ENCODE measurements at regions of chr7 and their contacts with region 1.

Region 1: GRCh38 chr7:129343099-129343700 is 91.0 kb upstream of the STRIP2 start:
- DNase-seq: peak; percentile 16
- ATAC-seq: peak; percentile 50
- H3K4me3 Mint-ChIP-seq: no peak overlapping the region
- H3K27ac Mint-ChIP-seq: no peak overlapping the region
- H3K4me1 Mint-ChIP-seq: peaks cover 31% of the 10 kb centered on the region
- H3K27me3 Mint-ChIP-seq: no peaks in the 10 kb centered on the region
- CTCF ChIP-seq: peak; percentile 83

Region 2: DNA sequence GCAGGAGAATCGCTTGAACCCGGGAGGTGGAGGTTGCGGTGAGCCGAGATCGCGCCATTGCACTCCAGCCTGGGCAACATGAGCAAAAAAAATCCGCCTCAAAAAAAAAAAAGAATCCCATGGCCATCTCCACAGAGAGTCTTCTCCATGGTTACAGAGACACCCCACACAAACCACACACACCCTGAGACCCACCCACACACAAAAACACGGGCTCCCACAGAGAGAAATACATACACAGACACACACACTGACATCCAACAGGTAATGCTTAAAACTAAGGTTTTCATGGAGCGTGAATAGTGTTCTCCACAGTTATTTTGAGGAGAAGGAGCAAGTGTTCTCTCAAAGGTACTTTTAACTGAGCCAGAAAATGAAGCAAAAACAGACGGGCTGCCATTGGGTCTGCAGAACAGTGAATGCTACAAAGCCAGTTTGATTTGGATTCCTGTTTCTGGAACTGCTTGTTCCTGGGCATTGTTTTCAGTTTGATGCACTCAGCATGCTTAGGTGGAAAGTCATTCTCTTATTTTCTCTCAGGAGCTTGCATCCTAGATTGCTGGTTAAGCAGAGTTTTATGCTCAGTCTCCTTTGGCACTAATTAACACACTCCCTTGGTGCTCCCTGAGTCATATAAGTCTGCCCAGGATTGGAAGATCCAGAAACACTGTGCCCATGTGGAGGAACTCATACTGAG is 102.9 kb before region 1 on chr7:
- CTCF ChIA-PET with region 1: no interaction called
- POLR2A ChIA-PET with region 1: no interaction called
- intact Hi-C with region 1: no loop called
- DNase-seq: no peak
- ATAC-seq: no peak
- H3K4me3 Mint-ChIP-seq: no peak overlapping the region
- H3K27ac Mint-ChIP-seq: no peak overlapping the region
- H3K4me1 Mint-ChIP-seq: peaks cover 5% of the 10 kb centered on the region
- H3K27me3 Mint-ChIP-seq: no peaks in the 10 kb centered on the region
- CTCF ChIP-seq: no peak

Region 3: GRCh38 chr7:129262324-129262723 is 80.9 kb before region 1 on chr7:
- CTCF ChIA-PET with region 1: no interaction called
- POLR2A ChIA-PET with region 1: no interaction called
- intact Hi-C with region 1: no loop called
- DNase-seq: peak; percentile 32
- ATAC-seq: peak; percentile 21
- H3K4me3 Mint-ChIP-seq: no peak overlapping the region
- H3K27ac Mint-ChIP-seq: peak overlapping the region; percentile 31
- H3K4me1 Mint-ChIP-seq: peaks cover 16% of the 10 kb centered on the region
- H3K27me3 Mint-ChIP-seq: no peaks in the 10 kb centered on the region
- CTCF ChIP-seq: no peak

Region 4: GRCh38 chr7:129285111-129285510 is 58.1 kb before region 1 on chr7:
- CTCF ChIA-PET with region 1: no interaction called
- POLR2A ChIA-PET with region 1: no interaction called
- intact Hi-C with region 1: no loop called
- DNase-seq: no peak
- ATAC-seq: no peak
- H3K4me3 Mint-ChIP-seq: no peak overlapping the region
- H3K27ac Mint-ChIP-seq: no peak overlapping the region
- H3K4me1 Mint-ChIP-seq: no peaks in the 10 kb centered on the region
- H3K27me3 Mint-ChIP-seq: no peaks in the 10 kb centered on the region
- CTCF ChIP-seq: no peak

Region 5: DNA sequence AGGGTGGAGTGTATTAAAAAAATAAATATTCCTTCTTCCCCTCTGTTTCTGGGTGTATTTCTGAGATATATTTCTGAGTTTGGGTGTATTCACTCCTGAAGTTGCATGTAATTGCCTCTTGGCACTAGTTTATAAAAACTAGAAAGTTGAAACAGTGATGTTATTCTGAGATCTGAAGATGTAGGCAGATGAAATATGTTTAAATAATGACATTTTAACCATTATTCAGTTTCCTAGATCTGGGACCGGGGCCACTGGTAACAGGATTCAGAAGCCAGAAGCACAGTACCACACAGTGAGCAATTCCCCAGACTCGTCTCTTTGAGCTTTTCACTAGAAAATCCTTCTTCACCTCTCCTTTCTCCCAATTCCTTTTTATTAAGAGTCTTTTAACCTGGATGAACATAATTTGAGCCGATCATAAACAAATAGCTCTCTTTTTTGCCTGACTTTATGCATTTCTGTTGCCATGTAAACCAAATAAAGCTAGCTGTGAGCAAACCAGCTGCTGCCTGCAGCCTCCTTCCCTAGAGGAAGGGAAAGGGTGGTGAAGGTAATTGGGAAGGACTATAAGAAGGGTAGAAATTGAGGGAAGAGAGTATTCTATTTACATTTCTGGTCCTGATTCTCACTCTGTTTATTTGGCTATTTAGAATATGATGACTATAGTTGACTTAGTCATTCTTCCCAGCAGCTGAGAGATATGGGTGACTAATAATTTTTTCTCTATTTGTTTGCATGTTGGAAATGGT is 10.7 kb before region 1 on chr7:
- CTCF ChIA-PET with region 1: interaction called, 28 read pairs
- POLR2A ChIA-PET with region 1: interaction called, 3 read pairs
- intact Hi-C with region 1: no loop called
- DNase-seq: no peak
- ATAC-seq: no peak
- H3K4me3 Mint-ChIP-seq: no peak overlapping the region
- H3K27ac Mint-ChIP-seq: no peak overlapping the region
- H3K4me1 Mint-ChIP-seq: no peaks in the 10 kb centered on the region
- H3K27me3 Mint-ChIP-seq: no peaks in the 10 kb centered on the region
- CTCF ChIP-seq: no peak

Region 6: DNA sequence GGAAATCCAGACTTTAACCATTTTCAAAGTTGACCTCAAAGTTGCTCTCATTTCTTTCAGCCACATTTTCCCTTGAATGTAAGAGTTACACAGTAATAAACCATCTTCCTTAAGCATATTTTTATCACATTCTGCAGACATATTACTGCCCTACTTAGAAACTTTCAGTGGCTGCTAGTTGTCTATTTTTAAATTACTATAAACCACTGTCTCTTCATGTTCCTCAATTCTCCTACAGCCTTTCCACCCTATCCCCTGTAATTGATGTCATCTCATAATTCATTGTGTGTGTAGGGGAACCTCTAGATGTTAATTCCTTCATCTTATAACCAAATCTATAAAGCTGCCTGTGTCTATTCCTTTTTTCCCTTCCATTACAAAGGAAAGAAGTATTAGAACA is 13.0 kb after region 1 on chr7:
- CTCF ChIA-PET with region 1: interaction called, 12 read pairs
- POLR2A ChIA-PET with region 1: no interaction called
- intact Hi-C with region 1: no loop called
- DNase-seq: no peak
- ATAC-seq: no peak
- H3K4me3 Mint-ChIP-seq: no peak overlapping the region
- H3K27ac Mint-ChIP-seq: no peak overlapping the region
- H3K4me1 Mint-ChIP-seq: peaks cover 5% of the 10 kb centered on the region
- H3K27me3 Mint-ChIP-seq: no peaks in the 10 kb centered on the region
- CTCF ChIP-seq: no peak